BJ (cell line): ENCODE measurements at regions of chr1 and their contacts with region 1.

Region 1: GRCh38 chr1:70265946-70266345 is 44.8 kb downstream of the SRSF11 start:
- DNase-seq: no peak
- H3K4me3 ChIP-seq: no peak overlapping the region
- H3K27me3 ChIP-seq: no peaks in the 10 kb centered on the region
- CTCF ChIP-seq: no peak

Region 2: DNA sequence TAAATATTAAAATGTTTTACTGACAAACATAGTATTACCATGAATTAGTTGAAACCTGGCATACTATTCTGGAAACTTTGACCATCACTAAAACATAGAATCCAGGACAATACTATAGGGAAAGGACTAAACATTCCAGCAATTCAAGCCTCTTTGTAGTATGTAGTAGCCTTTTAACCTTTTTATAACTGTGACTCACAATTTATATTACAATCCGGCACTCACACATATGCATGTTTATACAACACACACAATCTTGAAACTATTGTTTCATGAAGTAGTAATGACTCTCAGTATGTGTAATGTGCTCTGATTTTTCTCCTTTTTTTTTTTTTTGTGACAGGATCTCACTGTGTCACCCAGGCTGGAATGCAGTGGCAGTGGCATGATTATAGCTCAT is 24.3 kb after region 1 on chr1:
- CTCF ChIA-PET with region 1: interaction called, 4 read pairs
- POLR2A ChIA-PET with region 1: interaction called, 13 read pairs
- DNase-seq: no peak
- H3K4me3 ChIP-seq: no peak overlapping the region
- H3K27me3 ChIP-seq: no peaks in the 10 kb centered on the region
- CTCF ChIP-seq: no peak